ENCODE measurements at regions of chr11 and their contacts with region 1.

Region 1: GRCh38 chr11:8807544-8808225 is 103.3 kb upstream of the AKIP1 start:
- DNase-seq: no peak

Region 2: DNA sequence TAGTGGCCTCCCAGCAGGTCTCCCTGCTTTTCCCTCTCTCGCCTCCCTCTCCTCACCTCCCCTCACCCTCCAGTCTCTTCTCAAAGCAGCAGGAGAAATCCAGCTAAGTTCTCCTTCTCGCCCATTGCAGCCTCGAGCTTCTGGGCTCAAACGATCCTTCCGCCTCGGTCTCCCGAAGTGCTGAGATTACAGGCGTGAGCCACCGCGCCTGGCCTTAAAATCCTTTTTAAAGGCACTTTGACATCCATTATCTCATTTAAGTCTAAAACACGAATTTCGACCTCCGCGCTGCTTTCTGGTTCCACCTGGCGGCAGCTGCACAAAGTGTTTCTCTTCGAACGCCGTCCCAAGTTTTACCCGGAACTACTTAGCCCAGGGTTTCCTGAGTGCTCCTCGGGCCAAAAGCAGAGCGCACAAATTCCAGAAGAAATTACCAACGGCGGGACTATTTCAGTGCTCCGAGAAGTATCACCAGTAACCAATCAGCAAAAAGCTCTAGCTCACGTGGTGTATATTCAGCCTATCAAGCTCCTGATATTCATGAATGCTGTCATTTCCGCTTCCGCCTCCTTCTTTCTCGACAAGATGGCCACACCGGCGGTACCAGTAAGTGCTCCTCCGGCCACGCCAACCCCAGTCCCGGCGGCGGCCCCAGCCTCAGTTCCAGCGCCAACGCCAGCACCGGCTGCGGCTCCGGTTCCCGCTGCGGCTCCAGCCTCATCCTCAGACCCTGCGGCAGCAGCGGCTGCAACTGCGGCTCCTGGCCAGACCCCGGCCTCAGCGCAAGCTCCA is 820.7 kb before region 1 on chr11 and contains the start of gene EIF3F:
- intact Hi-C with region 1: no loop called
- DNase-seq: peak; percentile 92
- total RNA-seq, gene EIF3F: 123 TPM

Region 3: GRCh38 chr11:8604078-8604723 is 203.5 kb before region 1 on chr11:
- intact Hi-C with region 1: loop called (anchors 10 kb)
- DNase-seq: no peak

Measured in cardiac septum (tissue), 1 donor.